ENCODE measurements at regions of chr12 and their contacts with region 1.

Region 1: GRCh38 chr12:110742718-110743570 is at the start of gene PPP1CC:
- DNase-seq: peak; percentile 93
- H3K4me3 Mint-ChIP-seq: peak within 1 kb of the TSS; percentile 99
- H3K27ac Mint-ChIP-seq: peak within 1 kb of the TSS; percentile 98
- H3K4me1 Mint-ChIP-seq: peaks cover 39% of the 10 kb centered on the region
- H3K27me3 Mint-ChIP-seq: no peaks in the 10 kb centered on the region
- total RNA-seq, gene PPP1CC: 221 to 230 TPM

Region 2: GRCh38 chr12:110726708-110727369 is 16.1 kb before region 1 on chr12:
- CTCF ChIA-PET with region 1: interaction called, 12 read pairs
- POLR2A ChIA-PET with region 1: interaction called, 46 read pairs
- DNase-seq: no peak
- H3K4me3 Mint-ChIP-seq: no peak overlapping the region
- H3K27ac Mint-ChIP-seq: peak overlapping the region; percentile 81
- H3K4me1 Mint-ChIP-seq: peaks cover 62% of the 10 kb centered on the region
- H3K27me3 Mint-ChIP-seq: no peaks in the 10 kb centered on the region

Region 3: GRCh38 chr12:110776410-110776809 is 33.5 kb after region 1 on chr12:
- CTCF ChIA-PET with region 1: interaction called, 5 read pairs
- POLR2A ChIA-PET with region 1: interaction called, 24 read pairs
- DNase-seq: peak; percentile 45
- H3K4me3 Mint-ChIP-seq: peak overlapping the region; percentile 6
- H3K27ac Mint-ChIP-seq: peak overlapping the region; percentile 87
- H3K4me1 Mint-ChIP-seq: peaks cover 64% of the 10 kb centered on the region
- H3K27me3 Mint-ChIP-seq: no peaks in the 10 kb centered on the region

Measured in activated CD4-positive, alpha-beta memory T cell treated with anti-CD3 and anti-CD28 coated beads, Interleukin-2, amount 10 ng/mL, durations not matched to agents 7 days and 5 days (primary cell).